ENCODE measurements at regions of chr17 and their contacts with region 1.

Region 1: DNA sequence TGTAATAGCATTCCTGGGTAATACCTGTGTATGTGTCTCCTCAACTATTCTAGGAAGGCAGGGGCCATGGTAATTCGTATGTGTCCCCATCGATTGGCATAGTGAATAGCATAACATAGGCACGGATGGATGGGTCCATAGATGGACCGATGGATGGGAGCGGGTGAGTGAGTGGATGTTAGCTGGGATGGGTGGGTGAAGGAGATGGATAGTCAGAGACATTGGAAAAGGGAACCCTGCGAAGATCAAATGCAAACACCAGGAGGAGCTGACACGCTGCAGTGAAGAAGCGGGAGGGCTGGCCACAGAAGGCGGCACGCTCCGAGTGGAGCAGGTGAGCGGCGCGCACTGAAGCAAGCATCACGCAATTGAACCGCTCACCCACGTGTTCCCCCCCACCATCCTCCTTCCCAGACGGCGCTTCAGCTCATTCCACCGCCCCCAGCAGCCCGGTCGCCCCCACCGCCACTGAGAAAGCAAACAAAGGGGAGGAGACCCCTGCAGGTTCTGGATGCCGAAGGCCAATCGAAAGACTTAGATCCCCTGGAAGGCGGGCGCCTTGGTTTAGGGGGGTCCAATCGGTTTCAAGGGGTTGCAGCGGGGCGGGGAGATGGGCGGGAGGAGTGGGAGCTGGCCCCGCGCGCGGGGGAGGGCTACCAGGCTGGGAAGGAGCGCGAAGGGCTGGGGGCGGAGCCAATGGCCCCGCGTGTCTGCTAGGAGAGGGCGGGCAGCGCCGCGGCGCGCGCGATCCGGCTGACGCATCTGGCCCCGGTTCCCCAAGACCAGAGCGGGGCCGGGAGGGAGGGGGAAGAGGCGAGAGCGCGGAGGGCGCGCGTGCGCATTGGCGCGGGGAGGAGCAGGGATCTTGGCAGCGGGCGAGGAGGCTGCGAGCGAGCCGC is at the start of gene ARRB2:
- DNase-seq: peak; percentile 99 to 100
- ATAC-seq: peak; percentile 91
- H3K4me3 ChIP-seq: peak within 1 kb of the TSS; percentile 83
- H3K27ac ChIP-seq: peak within 1 kb of the TSS; percentile 94
- H3K4me1 ChIP-seq: peaks cover 27% of the 10 kb centered on the region
- CTCF ChIP-seq: peak; percentile 88
- EP300 ChIP-seq: no peak
- POLR2A ChIP-seq: peak; percentile 74
- RAD21 ChIP-seq: peak; percentile 91 to 94
- polyA plus RNA-seq, gene ARRB2: 73.1 and 74.9 TPM in 2 replicates

Region 2: DNA sequence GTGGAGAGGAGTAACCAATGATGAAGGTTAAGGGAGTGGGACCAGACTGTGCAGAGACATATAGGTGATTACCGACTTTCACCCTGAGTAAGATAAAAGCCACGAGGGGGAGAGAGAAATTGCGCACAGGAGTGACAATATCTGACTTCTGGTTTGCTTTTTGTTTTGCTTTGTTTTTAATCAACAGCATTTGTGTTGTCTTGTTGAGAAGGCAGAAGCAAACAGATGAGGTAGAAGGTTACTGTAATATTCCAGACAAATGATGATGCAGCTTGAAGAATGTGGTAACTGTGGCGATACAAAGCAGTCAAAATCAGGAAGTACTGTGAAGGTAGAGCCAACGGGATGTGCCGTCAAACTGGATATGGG is 13.6 kb before region 1 on chr17:
- CTCF ChIA-PET with region 1: interaction called, 12 read pairs
- POLR2A ChIA-PET with region 1: no interaction called
- DNase-seq: no peak
- ATAC-seq: no peak
- H3K4me3 ChIP-seq: no peak overlapping the region
- H3K27ac ChIP-seq: no peak overlapping the region
- H3K4me1 ChIP-seq: peaks cover 15% of the 10 kb centered on the region
- CTCF ChIP-seq: no peak
- EP300 ChIP-seq: no peak
- POLR2A ChIP-seq: no peak
- RAD21 ChIP-seq: no peak

Region 3: DNA sequence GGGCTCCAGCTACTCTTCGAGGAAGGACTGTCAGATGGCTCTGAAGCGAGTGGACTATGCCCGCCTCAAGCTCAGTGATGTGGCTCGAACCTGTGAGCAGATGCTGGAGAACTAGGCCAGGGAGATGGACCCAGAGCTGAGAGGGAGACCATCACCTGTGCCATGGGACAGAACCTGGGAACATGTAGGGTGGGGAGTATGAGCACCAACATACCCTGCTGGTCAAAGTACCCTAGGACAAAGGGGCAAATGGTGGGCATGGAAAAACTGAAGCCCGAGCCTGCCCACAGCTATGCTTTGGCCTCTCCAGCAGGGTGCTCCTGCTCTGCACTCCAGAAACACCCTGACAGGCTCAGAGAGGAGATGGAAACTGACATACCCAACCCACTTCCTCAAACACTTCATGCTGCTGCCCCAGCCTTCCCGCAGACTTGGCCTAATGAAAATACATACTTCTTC is 23.1 kb after region 1 on chr17:
- CTCF ChIA-PET with region 1: interaction called, 68 read pairs
- POLR2A ChIA-PET with region 1: interaction called, 24 read pairs
- DNase-seq: no peak
- ATAC-seq: no peak
- H3K4me3 ChIP-seq: no peak overlapping the region
- H3K27ac ChIP-seq: no peak overlapping the region
- H3K4me1 ChIP-seq: peaks cover 17% of the 10 kb centered on the region
- CTCF ChIP-seq: no peak
- EP300 ChIP-seq: no peak
- POLR2A ChIP-seq: no peak
- RAD21 ChIP-seq: peak in 1 of 2 experiments; percentile 14; a peak in 1 of 5 replicates

Region 4: DNA sequence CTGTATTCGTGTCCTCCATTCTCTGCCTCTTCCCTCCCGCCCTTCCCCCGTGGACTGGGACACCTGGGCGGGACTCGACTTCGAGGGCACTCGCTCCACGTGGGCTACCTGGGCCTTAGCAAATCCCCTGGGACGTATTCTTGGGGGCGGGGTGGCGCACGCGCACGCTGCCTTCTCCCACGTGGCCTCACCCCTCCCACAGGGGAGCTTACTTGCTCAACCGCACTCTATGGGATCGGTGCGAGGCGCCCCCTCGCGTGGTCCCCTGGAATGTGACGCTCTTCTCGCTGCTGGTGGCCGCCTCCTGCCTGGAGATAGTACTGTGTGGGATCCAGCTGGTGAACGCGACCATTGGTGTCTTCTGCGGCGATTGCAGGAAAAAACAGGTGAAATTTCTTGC is 72.6 kb after region 1 on chr17:
- CTCF ChIA-PET with region 1: interaction called, 108 read pairs
- POLR2A ChIA-PET with region 1: no interaction called
- DNase-seq: no peak
- ATAC-seq: peak in 1 of 2 experiments; percentile 11; a peak in 1 of 6 replicates
- H3K4me3 ChIP-seq: no peak overlapping the region
- H3K27ac ChIP-seq: no peak overlapping the region
- H3K4me1 ChIP-seq: peaks cover 13% of the 10 kb centered on the region; the same call in 2 of the 3 replicates
- CTCF ChIP-seq: no peak
- EP300 ChIP-seq: no peak
- POLR2A ChIP-seq: no peak
- RAD21 ChIP-seq: no peak

Region 5: DNA sequence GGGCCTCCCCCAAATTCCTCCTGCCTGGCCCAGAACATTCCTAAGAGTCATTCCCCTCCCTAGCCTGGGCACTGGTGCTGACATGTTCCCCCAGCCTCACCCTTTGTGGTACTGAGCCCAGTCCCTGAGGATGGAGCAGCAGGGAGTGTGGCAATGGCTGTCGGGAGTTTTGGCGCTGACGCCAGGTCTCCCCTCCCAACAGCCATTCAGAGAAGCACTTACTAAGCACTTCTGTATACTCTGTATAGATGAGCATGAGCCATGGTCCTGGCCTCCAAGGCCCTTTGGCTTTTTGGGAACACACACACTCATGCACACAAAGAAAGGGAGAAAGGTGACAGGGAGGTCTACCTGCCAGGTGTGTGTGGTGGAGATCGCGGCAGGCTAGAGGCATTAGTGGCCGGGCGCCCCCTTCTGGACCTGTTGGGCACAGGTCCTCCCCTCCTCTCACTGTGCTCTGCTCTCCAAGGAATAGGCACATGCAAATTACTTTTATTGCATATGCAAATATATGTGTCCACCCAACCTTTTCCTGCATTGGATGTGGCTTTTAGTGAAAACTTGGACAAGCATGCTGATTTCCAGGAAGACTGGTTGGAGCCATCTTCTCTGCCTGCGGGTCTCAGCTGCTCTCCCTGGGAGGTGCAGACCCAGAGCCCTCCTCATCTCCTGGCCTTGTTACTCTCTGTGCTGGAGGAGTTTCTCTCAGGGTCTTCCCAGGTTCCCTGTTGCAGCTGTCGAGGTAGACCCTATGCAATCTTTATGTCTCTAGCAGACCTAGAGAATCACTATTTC is 171.9 kb after region 1 on chr17:
- CTCF ChIA-PET with region 1: interaction called, 69 read pairs
- POLR2A ChIA-PET with region 1: no interaction called
- DNase-seq: peak; percentile 70 to 71
- ATAC-seq: peak; percentile 84 to 93
- H3K4me3 ChIP-seq: no peak overlapping the region
- H3K27ac ChIP-seq: no peak overlapping the region
- H3K4me1 ChIP-seq: no peaks in the 10 kb centered on the region
- CTCF ChIP-seq: peak; percentile 95
- EP300 ChIP-seq: no peak
- POLR2A ChIP-seq: no peak
- RAD21 ChIP-seq: peak; percentile 87 to 91

Region 6: DNA sequence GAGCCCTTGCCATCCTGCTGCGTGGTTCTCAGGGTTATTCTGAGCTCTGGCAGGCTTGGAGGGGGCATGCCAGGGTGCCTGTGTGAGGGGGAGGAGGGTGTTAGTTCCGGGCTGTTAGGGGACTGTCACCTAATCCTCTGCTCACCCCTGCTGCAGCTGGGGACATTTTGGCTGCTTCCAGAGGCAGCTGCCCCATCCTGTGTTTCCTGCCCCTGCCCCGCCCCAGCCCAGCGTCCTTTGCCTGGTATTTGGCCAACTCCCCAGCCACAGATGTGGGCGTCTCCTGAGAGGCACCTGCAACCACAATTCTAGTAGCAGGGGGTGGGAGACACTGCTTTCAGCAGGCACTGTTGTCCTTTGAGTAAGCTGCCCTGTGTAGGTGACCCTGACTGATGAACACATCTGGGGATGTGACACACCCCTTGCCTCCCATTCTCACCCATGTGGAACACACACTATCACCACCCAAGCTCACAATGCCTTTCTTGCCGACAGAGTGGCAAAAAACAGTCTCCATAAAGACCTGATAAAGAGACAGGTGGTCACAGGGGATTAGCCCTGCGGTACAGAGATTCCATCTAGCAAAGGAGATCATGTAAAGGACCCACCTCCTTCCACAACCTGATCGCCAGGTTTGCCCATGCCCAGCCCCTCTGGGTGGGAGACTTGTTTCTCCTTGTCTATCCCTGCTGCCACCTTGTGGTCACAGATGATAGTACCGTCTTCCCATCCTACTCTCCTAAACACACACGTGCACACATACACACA is 193.2 kb after region 1 on chr17 and contains the start of gene CHRNE:
- CTCF ChIA-PET with region 1: interaction called, 13 read pairs
- POLR2A ChIA-PET with region 1: no interaction called
- DNase-seq: peak; percentile 58 to 89
- ATAC-seq: peak; percentile 74 to 85
- H3K4me3 ChIP-seq: no peak within 1 kb of the TSS
- H3K27ac ChIP-seq: no peak within 1 kb of the TSS
- H3K4me1 ChIP-seq: 0 out of 3 replicates have a peak, but pooled peaks cover 5% of the 10 kb centered on the region
- CTCF ChIP-seq: peak; percentile 90
- EP300 ChIP-seq: no peak
- POLR2A ChIP-seq: no peak
- RAD21 ChIP-seq: peak; percentile 62 to 73
- polyA plus RNA-seq, gene CHRNE: 0.07 and 0.10 TPM in 2 replicates

Measured in A549 (cell line).